HepG2 (cell line): ENCODE measurements at regions of chr5 and their contacts with region 1.

Region 1: GRCh38 chr5:59390074-59390659 is 503.4 kb downstream of the PDE4D start:
- DNase-seq: peak; percentile 18
- ATAC-seq: no peak
- H3K4me3 ChIP-seq: no peak overlapping the region
- H3K27ac ChIP-seq: no peak overlapping the region
- H3K4me1 ChIP-seq: no peaks in the 10 kb centered on the region
- H3K27me3 ChIP-seq: no peaks in the 10 kb centered on the region
- CTCF ChIP-seq: peak; percentile 47
- EP300 ChIP-seq: no peak
- POLR2A ChIP-seq: no peak
- RAD21 ChIP-seq: no peak

Region 2: GRCh38 chr5:59264639-59265240 is 125.4 kb before region 1 on chr5:
- CTCF ChIA-PET with region 1: no interaction called
- POLR2A ChIA-PET with region 1: no interaction called
- in situ Hi-C with region 1: no loop called
- intact Hi-C with region 1: no loop called
- DNase-seq: no peak
- ATAC-seq: no peak
- H3K4me3 ChIP-seq: no peak overlapping the region
- H3K27ac ChIP-seq: no peak overlapping the region
- H3K4me1 ChIP-seq: peaks cover 9% of the 10 kb centered on the region; the same call in 1 of the 2 replicates
- H3K27me3 ChIP-seq: no peaks in the 10 kb centered on the region
- CTCF ChIP-seq: no peak
- EP300 ChIP-seq: no peak
- POLR2A ChIP-seq: no peak
- RAD21 ChIP-seq: no peak

Region 3: DNA sequence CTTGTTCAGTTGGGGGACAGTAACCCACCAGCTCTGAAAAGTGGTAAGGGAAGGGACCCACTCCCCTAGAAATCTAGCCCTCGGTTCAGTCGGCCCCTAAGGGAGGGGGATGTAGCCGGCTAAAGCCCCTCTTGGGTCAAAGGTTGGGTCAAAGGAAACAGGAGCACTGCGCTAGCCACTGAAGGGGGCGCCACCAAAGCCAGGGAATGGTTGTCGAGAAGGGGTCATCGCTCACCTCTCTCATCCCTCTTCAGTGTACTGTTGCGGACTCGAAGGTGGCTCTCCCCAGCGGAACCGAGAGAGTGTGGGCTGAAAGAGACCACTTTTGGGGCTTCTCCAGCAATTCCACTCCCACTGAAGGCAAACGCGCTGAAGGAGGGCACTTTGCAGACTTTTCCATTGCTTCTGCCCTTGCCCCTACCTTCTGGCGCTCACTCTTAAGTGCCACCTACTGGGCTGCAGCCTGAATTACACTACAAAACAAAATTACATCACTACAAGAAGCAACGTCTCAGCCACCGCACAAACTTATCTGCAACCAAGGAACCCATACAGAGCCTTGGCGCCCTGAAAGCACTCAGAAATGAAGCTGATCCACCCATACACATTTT is 106.5 kb after region 1 on chr5:
- CTCF ChIA-PET with region 1: no interaction called
- POLR2A ChIA-PET with region 1: no interaction called
- in situ Hi-C with region 1: no loop called
- intact Hi-C with region 1: loop called (anchors 5 kb)
- DNase-seq: no peak
- ATAC-seq: no peak; the same call in 2 of the 3 replicates
- H3K4me3 ChIP-seq: no peak overlapping the region
- H3K27ac ChIP-seq: no peak overlapping the region
- H3K4me1 ChIP-seq: no peaks in the 10 kb centered on the region
- H3K27me3 ChIP-seq: no peaks in the 10 kb centered on the region
- CTCF ChIP-seq: peak; percentile 58
- EP300 ChIP-seq: no peak
- POLR2A ChIP-seq: no peak
- RAD21 ChIP-seq: no peak

Region 4: GRCh38 chr5:59799668-59800346 is 409.6 kb after region 1 on chr5:
- CTCF ChIA-PET with region 1: no interaction called
- POLR2A ChIA-PET with region 1: no interaction called
- in situ Hi-C with region 1: no loop called
- intact Hi-C with region 1: loop called (anchors 5 kb)
- DNase-seq: peak; percentile 7
- ATAC-seq: no peak
- H3K4me3 ChIP-seq: no peak overlapping the region
- H3K27ac ChIP-seq: no peak overlapping the region
- H3K4me1 ChIP-seq: no peaks in the 10 kb centered on the region
- H3K27me3 ChIP-seq: no peaks in the 10 kb centered on the region
- CTCF ChIP-seq: peak; percentile 61
- EP300 ChIP-seq: no peak
- POLR2A ChIP-seq: no peak
- RAD21 ChIP-seq: no peak

Region 5: DNA sequence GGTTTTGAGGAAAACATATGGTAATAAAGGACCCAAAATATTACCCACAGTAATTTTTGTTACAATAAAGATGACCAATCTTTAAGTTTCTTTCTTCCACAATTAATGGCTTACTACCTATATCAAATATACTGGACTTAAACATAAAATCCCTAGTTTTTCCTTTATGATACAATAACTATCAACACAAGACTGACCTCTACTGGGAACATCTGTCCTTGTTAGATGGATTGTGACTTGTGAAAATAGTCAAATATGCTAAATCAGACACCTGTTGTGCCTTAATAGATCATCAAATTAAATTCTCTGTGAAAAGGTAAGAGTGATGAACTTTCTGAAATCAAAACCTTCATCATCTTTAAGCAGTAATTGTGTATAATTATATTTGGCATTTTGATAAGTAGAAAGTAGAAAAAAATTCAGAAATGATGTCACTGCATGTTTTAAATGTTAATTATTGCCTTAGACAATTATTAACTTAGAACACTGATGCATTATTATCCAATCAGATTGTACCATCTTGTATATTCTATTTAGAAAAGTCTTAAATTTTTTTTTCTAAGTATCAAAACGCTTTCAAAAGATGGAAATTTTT is 1196.2 kb after region 1 on chr5:
- CTCF ChIA-PET with region 1: no interaction called
- POLR2A ChIA-PET with region 1: no interaction called
- in situ Hi-C with region 1: loop called (anchors 25 kb)
- intact Hi-C with region 1: loop called (anchors 2 kb)
- DNase-seq: peak; percentile 54
- ATAC-seq: 0 out of 3 replicates have a peak, but pooled peaks have one; percentile 30
- H3K4me3 ChIP-seq: no peak overlapping the region
- H3K27ac ChIP-seq: no peak overlapping the region
- H3K4me1 ChIP-seq: peaks cover 12% of the 10 kb centered on the region; the same call in 1 of the 2 replicates
- H3K27me3 ChIP-seq: no peaks in the 10 kb centered on the region
- CTCF ChIP-seq: peak; percentile 67
- EP300 ChIP-seq: no peak
- POLR2A ChIP-seq: no peak
- RAD21 ChIP-seq: peak; percentile 62

Region 6: GRCh38 chr5:60649283-60649917 is 1259.2 kb after region 1 on chr5:
- CTCF ChIA-PET with region 1: no interaction called
- POLR2A ChIA-PET with region 1: no interaction called
- in situ Hi-C with region 1: loop called (anchors 25 kb)
- intact Hi-C with region 1: loop called (anchors 5 kb)
- DNase-seq: peak; percentile 59
- ATAC-seq: peak; percentile 66
- H3K4me3 ChIP-seq: no peak overlapping the region
- H3K27ac ChIP-seq: no peak overlapping the region
- H3K4me1 ChIP-seq: peaks cover 22% of the 10 kb centered on the region
- H3K27me3 ChIP-seq: no peaks in the 10 kb centered on the region
- CTCF ChIP-seq: peak; percentile 65
- EP300 ChIP-seq: no peak
- POLR2A ChIP-seq: no peak
- RAD21 ChIP-seq: peak; percentile 52; the same call in 1 of the 2 replicates